Ascending aorta (tissue), 2 donors: ENCODE measurements at regions of chr1 and their contacts with region 1.

Region 1: DNA sequence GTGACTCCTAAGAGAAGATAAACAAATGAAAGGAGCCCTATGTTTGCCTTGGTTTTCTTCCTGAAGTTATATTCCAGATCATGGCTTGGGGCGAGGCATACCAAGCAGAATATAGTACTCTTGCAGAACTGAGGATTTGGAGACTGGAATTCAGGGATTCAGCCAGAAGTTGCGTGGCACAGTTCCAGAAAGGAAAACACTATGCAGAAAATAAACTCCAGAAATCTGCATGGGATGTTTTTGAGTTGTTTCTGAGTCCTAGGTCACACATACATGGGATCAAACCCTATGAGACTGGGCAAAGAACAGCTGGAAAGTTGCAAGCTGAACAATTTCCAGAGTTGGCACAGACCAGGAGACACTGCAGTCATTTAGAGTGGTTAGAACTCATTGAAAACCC is 42.9 kb upstream of the IFFO2 start:
- DNase-seq: peak in 1 of 2 donors; percentile 83
- H3K4me3 ChIP-seq: no peak overlapping the region
- H3K27ac ChIP-seq: peak overlapping the region; percentile 72 to 78
- H3K4me1 ChIP-seq: peaks cover 0 to 22% of the 10 kb centered on the region in 2 donors
- H3K27me3 ChIP-seq: no peaks in the 10 kb centered on the region
- CTCF ChIP-seq: no peak

Region 2: GRCh38 chr1:18926315-18927081 is 72.9 kb before region 1 on chr1:
- intact Hi-C with region 1: no loop called
- DNase-seq: peak; percentile 83 to 95
- H3K4me3 ChIP-seq: peak overlapping the region in 1 of 2 donors; percentile 30
- H3K27ac ChIP-seq: peak overlapping the region; percentile 95 to 97
- H3K4me1 ChIP-seq: peaks cover 39 to 63% of the 10 kb centered on the region in 2 donors
- H3K27me3 ChIP-seq: no peaks in the 10 kb centered on the region
- CTCF ChIP-seq: no peak

Region 3: DNA sequence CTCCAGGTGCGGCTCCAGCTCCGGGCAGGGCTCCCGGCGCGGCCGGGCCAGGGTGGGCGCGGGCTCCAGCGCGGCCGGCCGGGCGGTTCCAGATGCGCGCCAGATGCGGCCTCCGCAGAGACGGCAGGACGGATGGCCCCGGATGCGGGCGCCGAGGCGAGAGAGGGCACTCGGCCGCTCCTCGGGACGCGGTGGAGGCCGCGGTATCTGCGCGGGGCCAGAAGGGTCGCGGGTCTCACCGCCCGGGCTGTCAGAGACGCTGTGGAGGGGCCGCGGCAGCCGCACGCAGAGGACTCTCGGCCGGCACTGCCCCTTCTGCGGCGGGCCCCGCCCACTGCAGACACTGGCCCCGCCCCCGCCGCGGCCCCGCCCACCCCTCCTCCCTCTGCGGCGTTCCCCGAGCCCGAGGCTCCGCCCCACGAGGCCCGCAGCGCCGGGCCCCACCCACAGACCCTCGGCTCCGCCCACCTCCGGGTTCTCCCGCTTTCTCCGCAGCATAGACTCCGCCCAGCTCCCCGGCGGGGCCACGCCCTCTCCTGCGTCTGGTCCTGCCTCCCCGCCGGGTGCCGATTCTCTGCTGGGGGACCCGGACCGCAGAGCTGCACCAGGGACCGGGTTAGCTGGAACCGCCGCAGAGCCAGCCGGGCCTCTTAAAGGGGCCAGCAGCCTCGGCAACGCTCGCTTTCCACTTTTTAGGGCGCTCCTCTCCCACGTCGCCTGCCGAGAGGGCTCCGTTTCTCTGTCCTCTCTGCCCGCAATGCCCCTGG is 42.8 kb before region 1 on chr1 and contains the start of gene IFFO2:
- intact Hi-C with region 1: loop called (anchors 2 kb)
- DNase-seq: peak; percentile 83 to 99
- H3K4me3 ChIP-seq: peak within 1 kb of the TSS; percentile 94 to 98
- H3K27ac ChIP-seq: peak within 1 kb of the TSS; percentile 94 to 97
- H3K4me1 ChIP-seq: peaks cover 3 to 24% of the 10 kb centered on the region in 2 donors
- H3K27me3 ChIP-seq: no peaks in the 10 kb centered on the region
- CTCF ChIP-seq: peak in 1 of 3 experiments; percentile 10
- total RNA-seq, gene IFFO2: 131 TPM